ENCODE measurements at regions of chr4 and their contacts with region 1.

Region 1: GRCh38 chr4:57043347-57044251 is 64.9 kb downstream of the POLR2B start:
- ATAC-seq: peak in 2 of 8 experiments; percentile 31 to 34
- H3K4me3 ChIP-seq: no peak overlapping the region
- H3K27ac ChIP-seq: no peak overlapping the region
- H3K4me1 ChIP-seq: no peaks in the 10 kb centered on the region

Region 2: DNA sequence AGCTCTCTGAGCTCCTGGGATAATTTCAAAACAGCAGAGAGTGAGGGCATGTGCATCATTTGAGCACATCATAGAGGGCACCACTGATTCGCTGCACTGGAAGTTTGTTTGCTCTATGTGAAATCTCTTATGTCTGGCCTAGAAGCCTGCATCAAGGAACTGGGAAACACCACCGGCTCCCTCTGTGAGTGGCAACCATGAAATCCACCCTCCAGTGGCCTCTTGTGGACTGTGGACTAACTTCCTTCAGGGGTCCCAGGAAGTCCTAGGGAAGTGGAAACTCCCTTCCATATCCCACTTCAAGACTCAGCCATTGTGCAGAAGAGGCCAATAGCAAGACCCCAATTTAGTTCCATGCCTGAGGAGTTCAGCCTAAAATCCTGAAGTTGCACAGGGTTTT is 114.6 kb after region 1 on chr4:
- in situ Hi-C with region 1: loop called in 2 of 9 experiments (anchors 10 kb)
- ATAC-seq: peak in 2 of 8 experiments; percentile 21 to 63
- H3K4me3 ChIP-seq: no peak overlapping the region
- H3K27ac ChIP-seq: no peak overlapping the region
- H3K4me1 ChIP-seq: peaks cover 0 to 4% of the 10 kb centered on the region in 2 donors